Transverse colon (tissue), 4 donors: ENCODE measurements at regions of chr7 and their contacts with region 1.

Region 1: GRCh38 chr7:127644479-127644878 is 7.5 kb upstream of the SND1 start:
- DNase-seq: no peak
- H3K4me3 ChIP-seq: no peak overlapping the region
- H3K27ac ChIP-seq: no peak overlapping the region
- H3K4me1 ChIP-seq: no peaks in the 10 kb centered on the region
- H3K27me3 ChIP-seq: no peaks in the 10 kb centered on the region
- CTCF ChIP-seq: no peak
- EP300 ChIP-seq: no peak
- POLR2A ChIP-seq: no peak

Region 2: DNA sequence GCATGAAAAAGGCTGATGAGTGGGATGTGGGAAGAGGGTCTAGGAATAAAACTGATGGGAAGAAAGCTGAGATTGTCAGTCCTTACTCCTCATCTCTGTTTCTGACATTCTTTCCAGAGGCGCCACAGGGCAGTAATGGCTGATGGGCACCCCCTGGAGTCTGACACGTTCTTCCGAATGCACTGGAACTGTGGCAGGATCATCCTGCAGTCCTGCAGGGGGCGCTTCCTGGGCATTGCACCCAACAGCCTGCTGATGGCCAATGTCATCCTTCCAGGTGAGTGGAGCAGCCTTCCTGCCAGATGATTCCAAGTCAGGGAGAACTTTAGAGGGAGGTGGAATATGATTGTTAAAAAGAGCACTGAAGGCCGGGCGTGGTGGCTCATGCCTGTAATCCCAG is 46.2 kb before region 1 on chr7:
- in situ Hi-C with region 1: loop called in 1 of 4 experiments (anchors 10 kb)
- intact Hi-C with region 1: loop called (anchors 10 kb)
- DNase-seq: no peak
- H3K4me3 ChIP-seq: no peak overlapping the region
- H3K27ac ChIP-seq: no peak overlapping the region
- H3K4me1 ChIP-seq: no peaks in the 10 kb centered on the region
- H3K27me3 ChIP-seq: no peaks in the 10 kb centered on the region
- CTCF ChIP-seq: peak in 1 of 5 experiments; percentile 14
- EP300 ChIP-seq: no peak
- POLR2A ChIP-seq: no peak